ENCODE measurements at regions of chr12 and their contacts with region 1.

Region 1: DNA sequence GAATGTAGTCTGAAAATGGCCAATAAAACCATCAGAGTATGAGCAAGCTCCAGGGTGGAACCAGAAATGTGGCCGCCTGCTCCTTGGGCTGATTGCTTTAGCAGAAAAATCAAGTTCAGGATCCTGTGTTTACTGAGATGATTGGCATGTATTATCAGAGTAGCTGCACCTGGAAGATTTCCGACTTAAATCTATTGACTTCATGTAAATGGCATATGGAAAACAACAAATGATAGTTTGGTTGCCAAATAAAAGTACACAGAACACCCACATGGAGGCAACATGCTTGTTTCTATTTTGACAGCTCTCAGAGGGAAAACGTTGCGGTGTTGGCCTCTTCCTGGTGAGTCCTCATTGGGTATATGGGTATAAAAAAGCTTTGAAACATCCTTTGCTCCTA is 31.3 kb downstream of the SOCS2 start:
- DNase-seq: peak; percentile 56 to 77 (median 71)
- H3K4me3 ChIP-seq: peak overlapping the region in 1 of 7 experiments; percentile 13
- H3K27ac ChIP-seq: no peak overlapping the region
- H3K4me1 ChIP-seq: peaks cover 9 to 25% (median 14%) of the 10 kb centered on the region in 4 experiments
- H3K27me3 ChIP-seq: no peaks in the 10 kb centered on the region

Region 2: GRCh38 chr12:93591137-93591868 is 12.5 kb before region 1 on chr12:
- CTCF ChIA-PET with region 1: interaction called, 12 read pairs
- POLR2A ChIA-PET with region 1: no interaction called
- DNase-seq: peak; percentile 79 to 91 (median 86)
- H3K4me3 ChIP-seq: peak overlapping the region; percentile 29 to 92 (median 84)
- H3K27ac ChIP-seq: peak overlapping the region; percentile 71 to 90
- H3K4me1 ChIP-seq: peaks cover 27 to 72% (median 47%) of the 10 kb centered on the region in 4 experiments
- H3K27me3 ChIP-seq: no peaks in the 10 kb centered on the region

Measured in common myeloid progenitor, CD34-positive (primary cell).